ENCODE measurements at regions of chr7 and their contacts with region 1.

Region 1: GRCh38 chr7:130069978-130070860 is at the start of gene KLHDC10:
- DNase-seq: peak; percentile 89 to 99 (median 96)
- ATAC-seq: peak; percentile 93
- H3K4me3 ChIP-seq: peak within 1 kb of the TSS; percentile 67 to 72
- H3K4me3 Mint-ChIP-seq: peak within 1 kb of the TSS; percentile 87
- H3K27ac ChIP-seq: peak within 1 kb of the TSS; percentile 76 to 85
- H3K27ac Mint-ChIP-seq: peak within 1 kb of the TSS; percentile 92
- H3K4me1 ChIP-seq: peaks cover 22% of the 10 kb centered on the region
- H3K4me1 Mint-ChIP-seq: peaks cover 45% of the 10 kb centered on the region
- H3K27me3 ChIP-seq: peaks cover 0 to 2% of the 10 kb centered on the region in 2 experiments
- H3K27me3 Mint-ChIP-seq: no peaks in the 10 kb centered on the region
- CTCF ChIP-seq: no peak
- total RNA-seq, gene KLHDC10: 9.6 to 9.9 TPM

Region 2: DNA sequence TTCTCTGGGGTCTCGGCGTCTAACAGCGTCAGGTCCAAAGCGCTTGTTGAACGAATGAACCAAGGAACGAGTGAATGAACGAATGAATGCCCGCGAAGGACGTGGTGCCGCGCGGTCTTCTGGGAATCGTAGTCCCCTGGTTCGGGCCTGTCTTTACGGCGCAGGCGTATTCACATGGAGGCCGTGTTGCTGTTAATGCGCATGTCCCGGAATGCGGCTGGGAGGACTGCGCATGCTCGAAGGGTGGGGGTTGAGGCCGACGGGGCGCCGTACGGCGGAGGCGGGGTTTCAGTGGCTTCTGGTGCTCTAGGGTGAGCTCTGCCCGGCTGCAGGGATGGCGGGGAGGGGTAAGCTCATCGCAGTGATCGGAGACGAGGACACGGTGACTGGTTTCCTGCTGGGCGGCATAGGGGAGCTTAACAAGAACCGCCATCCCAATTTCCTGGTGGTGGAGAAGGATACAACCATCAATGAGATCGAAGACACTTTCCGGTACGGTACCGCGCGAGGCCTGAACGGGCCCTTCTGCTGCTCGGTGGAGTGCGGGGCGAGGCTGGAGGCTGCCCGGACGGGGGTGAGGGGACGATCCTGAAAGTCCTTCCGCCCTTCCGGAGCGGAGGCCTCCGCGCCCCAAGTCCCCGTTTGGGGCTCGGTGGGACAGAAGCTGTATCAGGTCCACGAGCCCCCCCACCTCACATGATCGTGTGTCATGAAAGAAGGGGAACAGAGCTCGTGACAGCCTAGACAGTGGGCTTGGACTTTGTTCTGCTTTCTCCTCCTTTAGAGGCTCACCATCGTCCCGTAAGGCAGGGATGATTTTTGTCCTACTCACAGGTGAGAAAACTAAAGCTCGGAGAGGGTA is 1207.4 kb before region 1 on chr7 and contains the start of gene ATP6V1F:
- CTCF ChIA-PET with region 1: no interaction called
- POLR2A ChIA-PET with region 1: no interaction called
- intact Hi-C with region 1: loop called in 1 of 2 experiments (anchors 5 kb)
- DNase-seq: peak; percentile 97 to 100 (median 99)
- ATAC-seq: peak; percentile 87
- H3K4me3 ChIP-seq: peak within 1 kb of the TSS; percentile 80 to 92
- H3K4me3 Mint-ChIP-seq: peak within 1 kb of the TSS; percentile 96
- H3K27ac ChIP-seq: peak within 1 kb of the TSS; percentile 71 to 74
- H3K27ac Mint-ChIP-seq: peak within 1 kb of the TSS; percentile 94
- H3K4me1 ChIP-seq: peaks cover 17% of the 10 kb centered on the region
- H3K4me1 Mint-ChIP-seq: peaks cover 34% of the 10 kb centered on the region
- H3K27me3 ChIP-seq: no peaks in the 10 kb centered on the region
- H3K27me3 Mint-ChIP-seq: no peaks in the 10 kb centered on the region
- CTCF ChIP-seq: no peak
- total RNA-seq, gene ATP6V1F: 54.8 to 59.3 TPM

Region 3: DNA sequence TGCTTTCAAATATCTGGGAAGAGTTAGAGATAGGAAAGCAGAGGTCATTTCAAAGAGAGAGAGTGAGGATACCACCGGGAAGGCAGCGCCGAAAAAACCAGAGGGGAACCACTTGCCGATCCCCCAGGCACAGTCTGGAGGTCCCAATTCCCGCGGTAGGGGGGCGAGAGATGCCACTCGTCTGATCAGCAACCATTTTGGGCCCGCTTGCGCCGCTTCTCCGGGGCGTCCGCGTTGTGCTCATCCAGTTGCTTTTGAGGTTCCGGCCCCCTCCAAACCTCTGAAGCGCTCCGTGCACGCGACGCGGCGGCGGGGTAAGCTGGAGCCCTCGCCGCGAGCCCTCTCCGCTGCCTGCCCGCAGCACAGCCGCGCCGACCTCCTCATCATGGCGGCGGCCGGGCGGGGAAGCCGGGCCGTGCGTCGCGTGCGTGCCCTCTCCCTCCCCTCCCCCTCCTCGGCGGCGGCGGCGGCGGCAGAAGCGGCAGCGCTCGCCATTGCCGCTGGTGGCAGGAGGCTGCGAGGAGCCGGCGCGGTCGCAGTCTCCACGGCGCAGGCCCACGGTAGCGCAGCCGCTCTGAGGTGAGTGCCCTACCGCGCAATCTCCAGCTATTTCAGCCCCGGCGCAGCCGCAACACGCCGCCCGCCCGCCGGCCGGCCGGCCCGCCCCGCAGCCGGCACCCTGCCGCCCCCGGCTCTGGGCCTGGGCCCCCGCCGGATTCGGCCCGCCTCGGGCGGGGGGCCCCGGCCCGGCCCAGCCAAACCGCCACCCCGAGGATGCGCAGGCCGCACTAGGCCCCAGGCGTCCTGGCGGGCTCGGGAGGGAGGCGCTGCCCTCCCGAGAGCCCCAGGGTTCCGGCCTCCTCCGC is 458.7 kb before region 1 on chr7 and contains the start of gene NRF1:
- CTCF ChIA-PET with region 1: no interaction called
- POLR2A ChIA-PET with region 1: no interaction called
- intact Hi-C with region 1: loop called in 1 of 2 experiments (anchors 5 kb)
- DNase-seq: peak; percentile 82 to 97 (median 91)
- ATAC-seq: peak; percentile 87
- H3K4me3 ChIP-seq: peak within 1 kb of the TSS; percentile 87 to 91
- H3K4me3 Mint-ChIP-seq: peak within 1 kb of the TSS; percentile 97
- H3K27ac ChIP-seq: peak within 1 kb of the TSS; percentile 68 to 85
- H3K27ac Mint-ChIP-seq: peak within 1 kb of the TSS; percentile 96
- H3K4me1 ChIP-seq: peaks cover 40% of the 10 kb centered on the region
- H3K4me1 Mint-ChIP-seq: peaks cover 67% of the 10 kb centered on the region
- H3K27me3 ChIP-seq: no peaks in the 10 kb centered on the region
- H3K27me3 Mint-ChIP-seq: no peaks in the 10 kb centered on the region
- CTCF ChIP-seq: no peak
- total RNA-seq, gene NRF1: 31.9 to 34.9 TPM

Region 4: GRCh38 chr7:129989466-129989865 is 80.8 kb before region 1 on chr7:
- CTCF ChIA-PET with region 1: no interaction called
- POLR2A ChIA-PET with region 1: no interaction called
- intact Hi-C with region 1: no loop called
- DNase-seq: peak in 7 of 9 experiments; percentile 9 to 69 (median 38)
- ATAC-seq: peak; percentile 36
- H3K4me3 ChIP-seq: no peak overlapping the region
- H3K4me3 Mint-ChIP-seq: no peak overlapping the region
- H3K27ac ChIP-seq: no peak overlapping the region
- H3K27ac Mint-ChIP-seq: no peak overlapping the region
- H3K4me1 ChIP-seq: peaks cover 6% of the 10 kb centered on the region
- H3K4me1 Mint-ChIP-seq: peaks cover 9% of the 10 kb centered on the region
- H3K27me3 ChIP-seq: no peaks in the 10 kb centered on the region
- H3K27me3 Mint-ChIP-seq: peaks cover 2% of the 10 kb centered on the region
- CTCF ChIP-seq: no peak

Region 5: DNA sequence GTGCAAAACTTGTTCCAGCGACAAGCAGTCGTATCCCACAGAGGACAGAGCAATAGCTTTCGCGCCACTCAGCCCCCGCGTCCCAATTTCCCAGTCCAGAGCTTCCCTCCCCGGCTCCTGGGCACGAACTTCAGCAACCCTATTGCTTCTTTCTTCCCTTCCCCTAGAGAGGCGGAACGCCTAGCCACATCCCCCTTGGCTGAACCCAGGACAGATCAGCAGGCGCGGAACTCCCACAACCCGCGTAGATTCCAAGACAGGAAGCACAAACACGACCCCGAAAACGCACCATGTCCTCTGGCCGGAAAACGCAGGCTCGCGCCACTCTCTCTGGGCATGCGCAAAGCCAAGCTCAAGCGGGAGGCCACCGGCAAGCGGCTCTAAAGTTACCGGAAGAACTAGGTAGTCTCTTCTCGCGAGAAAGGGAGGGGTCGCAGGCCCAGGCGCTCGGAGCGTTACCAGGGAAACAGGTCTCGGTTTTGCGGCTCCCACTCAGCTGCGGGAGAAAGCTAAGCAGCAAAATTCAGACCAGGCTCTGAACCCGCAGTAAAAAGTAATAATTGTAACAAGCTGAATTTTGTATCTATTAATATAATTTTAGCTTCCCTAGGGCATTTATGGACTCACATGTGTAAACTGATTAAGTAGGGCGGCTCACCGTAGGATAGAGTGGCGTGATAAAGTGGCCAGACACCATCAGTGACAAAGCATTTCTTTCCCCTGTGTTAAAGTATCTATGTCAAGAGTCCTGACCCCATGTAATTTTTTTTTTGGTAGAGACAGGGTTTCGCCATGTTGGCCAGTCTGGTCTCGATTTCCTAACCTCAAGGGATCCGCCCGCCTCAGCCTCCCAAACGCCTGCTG is 135.1 kb after region 1 on chr7 and contains the start of gene TMEM209:
- CTCF ChIA-PET with region 1: interaction called, 4 read pairs
- POLR2A ChIA-PET with region 1: interaction called, 5 read pairs
- intact Hi-C with region 1: loop called (anchors 1 kb)
- DNase-seq: peak; percentile 85 to 97 (median 93)
- ATAC-seq: peak; percentile 96
- H3K4me3 ChIP-seq: peak within 1 kb of the TSS; percentile 95 to 99
- H3K4me3 Mint-ChIP-seq: peak within 1 kb of the TSS; percentile 100
- H3K27ac ChIP-seq: peak within 1 kb of the TSS; percentile 80 to 92
- H3K27ac Mint-ChIP-seq: peak within 1 kb of the TSS; percentile 100
- H3K4me1 ChIP-seq: peaks cover 5% of the 10 kb centered on the region
- H3K4me1 Mint-ChIP-seq: peaks cover 34% of the 10 kb centered on the region
- H3K27me3 ChIP-seq: no peaks in the 10 kb centered on the region
- H3K27me3 Mint-ChIP-seq: no peaks in the 10 kb centered on the region
- CTCF ChIP-seq: no peak
- total RNA-seq, gene TMEM209: 15.7 to 15.9 TPM

Region 6: GRCh38 chr7:130486114-130486958 is 416.1 kb after region 1 on chr7:
- CTCF ChIA-PET with region 1: no interaction called
- POLR2A ChIA-PET with region 1: no interaction called
- intact Hi-C with region 1: loop called (anchors 5 kb)
- DNase-seq: peak; percentile 21 to 79 (median 67)
- ATAC-seq: peak; percentile 83
- H3K4me3 ChIP-seq: peak overlapping the region; percentile 63 to 86
- H3K4me3 Mint-ChIP-seq: peak overlapping the region; percentile 93
- H3K27ac ChIP-seq: peak overlapping the region in 1 of 2 experiments; percentile 31
- H3K27ac Mint-ChIP-seq: peak overlapping the region; percentile 86
- H3K4me1 ChIP-seq: peaks cover 10% of the 10 kb centered on the region
- H3K4me1 Mint-ChIP-seq: peaks cover 33% of the 10 kb centered on the region
- H3K27me3 ChIP-seq: peaks cover 0 to 3% of the 10 kb centered on the region in 2 experiments
- H3K27me3 Mint-ChIP-seq: peaks cover 20% of the 10 kb centered on the region
- CTCF ChIP-seq: peak; percentile 95

Region 7: GRCh38 chr7:130758429-130759056 is 688.3 kb after region 1 on chr7:
- CTCF ChIA-PET with region 1: interaction called, 20 read pairs
- POLR2A ChIA-PET with region 1: no interaction called
- intact Hi-C with region 1: loop called (anchors 1 kb)
- DNase-seq: peak in 2 of 9 experiments; percentile 57 to 71
- ATAC-seq: peak; percentile 56
- H3K4me3 ChIP-seq: no peak overlapping the region
- H3K4me3 Mint-ChIP-seq: no peak overlapping the region
- H3K27ac ChIP-seq: no peak overlapping the region
- H3K27ac Mint-ChIP-seq: no peak overlapping the region
- H3K4me1 ChIP-seq: no peaks in the 10 kb centered on the region
- H3K4me1 Mint-ChIP-seq: no peaks in the 10 kb centered on the region
- H3K27me3 ChIP-seq: no peaks in the 10 kb centered on the region
- H3K27me3 Mint-ChIP-seq: peaks cover 6% of the 10 kb centered on the region
- CTCF ChIP-seq: peak; percentile 84

Measured in CD8-positive, alpha-beta T cell (primary cell).